Endothelial cell of umbilical vein (primary cell): ENCODE measurements at regions of chr15 and their contacts with region 1.

Region 1: DNA sequence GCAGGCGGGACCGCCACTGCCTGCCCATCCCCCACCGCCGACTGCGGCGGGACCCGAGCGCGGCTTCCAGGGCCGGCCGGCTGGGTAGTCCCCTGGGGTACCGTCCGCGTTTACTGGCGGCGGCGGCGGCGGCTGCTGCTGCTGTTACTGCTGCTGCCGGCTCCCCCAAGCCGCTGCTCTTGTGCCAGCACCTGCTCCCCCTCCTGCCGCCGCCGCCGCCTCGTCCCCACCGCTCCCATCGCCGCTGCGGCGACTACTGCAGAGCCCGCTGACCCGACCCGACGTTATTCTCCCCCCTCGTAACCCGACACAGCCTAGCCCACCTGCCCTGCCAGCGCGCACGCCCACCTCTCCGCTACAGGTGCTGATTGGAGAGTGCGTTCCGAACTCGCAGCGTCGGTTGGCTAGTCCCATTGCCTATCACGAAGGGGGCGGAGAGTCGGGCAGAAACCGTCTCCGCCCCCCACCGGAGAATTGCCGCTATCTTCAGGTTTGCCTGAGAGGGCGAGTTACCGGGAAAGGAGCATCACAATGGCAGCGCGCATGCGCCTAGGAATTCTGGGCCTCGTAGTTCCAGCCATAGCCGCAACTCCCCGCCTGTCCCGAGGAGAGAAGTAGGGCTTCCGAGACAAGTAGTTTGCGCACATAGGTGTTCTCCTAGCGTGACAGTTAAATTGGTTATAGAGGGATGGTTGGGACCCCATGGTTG is at the start of gene TTBK2:
- DNase-seq: peak; percentile 99
- H3K4me3 ChIP-seq: peak within 1 kb of the TSS; percentile 82 to 87 (median 84)
- H3K27ac ChIP-seq: no peak within 1 kb of the TSS
- H3K4me1 ChIP-seq: peaks cover 26% of the 10 kb centered on the region
- H3K27me3 ChIP-seq: no peaks in the 10 kb centered on the region
- CTCF ChIP-seq: peak in 1 of 2 donors; percentile 18
- POLR2A ChIP-seq: no peak
- total RNA-seq, gene TTBK2: 16.9 and 17.1 TPM in 2 replicates

Region 2: DNA sequence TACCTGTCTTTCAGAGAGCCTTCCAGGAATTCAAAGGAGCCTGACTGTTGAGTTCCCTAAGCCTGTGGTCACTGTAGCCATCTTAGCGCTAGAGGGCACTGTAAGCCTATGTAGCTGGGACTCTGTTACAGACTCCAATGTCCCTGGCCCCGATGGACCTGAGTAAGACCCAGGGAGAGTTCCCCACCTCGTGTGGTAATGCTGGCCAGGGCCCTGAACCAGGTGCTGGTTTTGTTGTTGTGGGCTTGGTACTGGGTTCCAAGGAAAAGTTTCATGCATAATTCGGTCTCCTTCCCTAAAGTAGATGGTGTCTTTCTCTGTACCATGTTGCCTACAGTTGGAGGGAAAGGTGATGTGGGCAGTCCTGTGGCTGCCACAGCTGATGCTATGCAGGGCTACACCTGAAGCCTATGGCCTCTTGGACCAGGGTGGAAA is 216.2 kb before region 1 on chr15:
- CTCF ChIA-PET with region 1: interaction called, 75 read pairs
- POLR2A ChIA-PET with region 1: no interaction called
- dilution Hi-C with region 1: no loop called
- intact Hi-C with region 1: no loop called
- DNase-seq: peak; percentile 79
- H3K4me3 ChIP-seq: no peak overlapping the region
- H3K27ac ChIP-seq: no peak overlapping the region
- H3K4me1 ChIP-seq: peaks cover 12% of the 10 kb centered on the region
- H3K27me3 ChIP-seq: no peaks in the 10 kb centered on the region
- CTCF ChIP-seq: peak; percentile 81 to 85
- POLR2A ChIP-seq: no peak

Region 3: GRCh38 chr15:42736793-42737528 is 183.7 kb before region 1 on chr15 and contains the start of gene CDAN1:
- CTCF ChIA-PET with region 1: interaction called, 67 read pairs
- POLR2A ChIA-PET with region 1: no interaction called
- dilution Hi-C with region 1: no loop called
- intact Hi-C with region 1: loop called (anchors 1 kb)
- DNase-seq: peak; percentile 88
- H3K4me3 ChIP-seq: peak within 1 kb of the TSS; percentile 47 to 98 (median 71)
- H3K27ac ChIP-seq: peak within 1 kb of the TSS; percentile 63
- H3K4me1 ChIP-seq: peaks cover 11% of the 10 kb centered on the region
- H3K27me3 ChIP-seq: no peaks in the 10 kb centered on the region
- CTCF ChIP-seq: no peak
- POLR2A ChIP-seq: peak; percentile 80
- total RNA-seq, gene CDAN1: 23.4 and 25.9 TPM in 2 replicates

Region 4: DNA sequence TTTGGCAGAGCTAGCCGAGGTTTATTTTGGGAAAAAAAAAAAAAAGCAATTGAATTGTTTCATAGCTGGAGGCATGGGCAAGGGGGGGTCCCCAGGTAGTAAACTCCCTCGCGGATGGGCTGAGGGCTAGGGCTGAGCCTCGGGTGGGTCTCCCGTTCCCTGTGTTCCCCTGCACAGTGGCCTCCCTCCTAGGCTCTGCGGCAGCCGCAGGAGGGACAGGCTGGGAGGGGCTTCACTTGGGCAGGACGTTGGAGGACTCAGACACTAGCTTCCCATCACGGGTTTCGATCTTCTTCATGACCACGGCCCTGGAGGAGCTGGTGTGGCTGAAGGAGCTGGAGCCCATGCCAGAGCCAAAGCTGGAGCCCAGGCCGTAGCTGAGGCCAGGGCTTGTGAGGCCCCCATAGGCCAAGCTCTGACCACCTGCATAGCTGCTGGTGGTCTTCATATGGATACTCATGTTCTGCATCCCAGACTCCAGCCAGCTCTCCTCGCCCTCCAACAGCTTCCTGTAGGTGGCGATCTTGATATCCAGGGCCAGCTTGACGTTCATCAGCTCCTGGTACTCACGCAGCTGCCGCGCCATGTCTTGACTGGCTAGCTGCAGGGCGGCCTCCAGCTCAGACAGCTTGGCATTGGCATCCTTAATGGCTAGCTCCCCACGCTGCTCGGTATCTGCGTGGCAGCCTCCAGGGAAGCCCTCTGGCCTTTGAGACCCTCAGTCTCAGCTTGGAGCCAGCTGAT is 119.8 kb before region 1 on chr15:
- CTCF ChIA-PET with region 1: interaction called, 31 read pairs
- POLR2A ChIA-PET with region 1: no interaction called
- dilution Hi-C with region 1: no loop called
- intact Hi-C with region 1: no loop called
- DNase-seq: no peak
- H3K4me3 ChIP-seq: no peak overlapping the region
- H3K27ac ChIP-seq: no peak overlapping the region
- H3K4me1 ChIP-seq: no peaks in the 10 kb centered on the region
- H3K27me3 ChIP-seq: no peaks in the 10 kb centered on the region
- CTCF ChIP-seq: peak in 1 of 2 donors; percentile 5
- POLR2A ChIP-seq: no peak

Region 5: GRCh38 chr15:42891569-42891968 is 29.1 kb before region 1 on chr15:
- CTCF ChIA-PET with region 1: interaction called, 3 read pairs
- POLR2A ChIA-PET with region 1: no interaction called
- dilution Hi-C with region 1: no loop called
- intact Hi-C with region 1: loop called (anchors 2 kb)
- DNase-seq: peak; percentile 14
- H3K4me3 ChIP-seq: no peak overlapping the region
- H3K27ac ChIP-seq: peak overlapping the region; percentile 97
- H3K4me1 ChIP-seq: peaks cover 20% of the 10 kb centered on the region
- H3K27me3 ChIP-seq: no peaks in the 10 kb centered on the region
- CTCF ChIP-seq: no peak
- POLR2A ChIP-seq: no peak

Region 6: GRCh38 chr15:43056696-43057095 is 136.0 kb after region 1 on chr15:
- CTCF ChIA-PET with region 1: no interaction called
- POLR2A ChIA-PET with region 1: no interaction called
- dilution Hi-C with region 1: no loop called
- intact Hi-C with region 1: no loop called
- DNase-seq: no peak
- H3K4me3 ChIP-seq: no peak overlapping the region
- H3K27ac ChIP-seq: no peak overlapping the region
- H3K4me1 ChIP-seq: no peaks in the 10 kb centered on the region
- H3K27me3 ChIP-seq: no peaks in the 10 kb centered on the region
- CTCF ChIP-seq: no peak
- POLR2A ChIP-seq: no peak